OCI-LY7 (cell line): ENCODE measurements at regions of chr10 and their contacts with region 1.

Region 1: GRCh38 chr10:526651-527311 is 162.7 kb downstream of the DIP2C start:
- DNase-seq: peak; percentile 87
- H3K4me3 ChIP-seq: peak overlapping the region; percentile 24
- H3K27ac ChIP-seq: peak overlapping the region; percentile 49
- H3K4me1 ChIP-seq: peaks cover 59% of the 10 kb centered on the region
- CTCF ChIP-seq: peak; percentile 88

Region 2: DNA sequence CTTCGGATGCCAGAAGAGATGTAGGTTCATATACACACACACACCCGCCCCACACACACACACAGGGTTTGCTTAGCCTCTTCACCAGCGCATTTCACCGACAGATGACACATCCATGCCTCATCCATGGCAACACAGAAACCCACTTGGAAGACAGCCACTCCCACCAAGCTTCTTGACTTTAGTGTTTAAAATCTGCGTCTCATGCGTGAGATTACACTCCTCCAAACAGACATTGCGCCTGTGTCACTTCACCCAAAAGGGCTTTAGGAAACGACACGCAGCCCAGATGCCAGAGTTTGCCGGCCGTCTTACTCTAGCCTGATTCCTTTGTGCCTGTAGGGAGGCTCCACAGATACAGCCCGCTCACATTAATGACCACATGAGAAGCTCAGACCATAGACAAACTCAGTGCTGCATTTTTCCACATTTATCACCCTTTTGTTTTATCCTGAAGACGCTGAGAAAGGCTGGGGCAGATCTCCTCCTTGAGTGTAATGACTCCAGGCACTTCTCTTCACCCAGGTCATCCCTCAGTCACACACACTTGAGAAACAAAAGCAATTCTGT is 88.9 kb after region 1 on chr10:
- CTCF ChIA-PET with region 1: interaction called, 3 read pairs
- POLR2A ChIA-PET with region 1: no interaction called
- intact Hi-C with region 1: loop called (anchors 5 kb)
- DNase-seq: no peak
- H3K4me3 ChIP-seq: no peak overlapping the region
- H3K27ac ChIP-seq: no peak overlapping the region
- H3K4me1 ChIP-seq: peaks cover 13% of the 10 kb centered on the region
- CTCF ChIP-seq: no peak